CD8-positive, alpha-beta T cell (primary cell): ENCODE measurements at regions of chr18 and their contacts with region 1.

Region 1: GRCh38 chr18:34965108-34965507 is 76.1 kb upstream of the MAPRE2 start:
- DNase-seq: no peak
- ATAC-seq: no peak
- H3K4me3 ChIP-seq: no peak overlapping the region
- H3K4me3 Mint-ChIP-seq: no peak overlapping the region
- H3K27ac ChIP-seq: no peak overlapping the region
- H3K27ac Mint-ChIP-seq: no peak overlapping the region
- H3K4me1 ChIP-seq: no peaks in the 10 kb centered on the region
- H3K4me1 Mint-ChIP-seq: no peaks in the 10 kb centered on the region
- H3K27me3 ChIP-seq: no peaks in the 10 kb centered on the region
- H3K27me3 Mint-ChIP-seq: peaks cover 4% of the 10 kb centered on the region
- CTCF ChIP-seq: no peak

Region 2: GRCh38 chr18:34611904-34612303 is 353.2 kb before region 1 on chr18:
- CTCF ChIA-PET with region 1: no interaction called
- POLR2A ChIA-PET with region 1: no interaction called
- intact Hi-C with region 1: loop called in 1 of 2 experiments (anchors 5 kb)
- DNase-seq: no peak
- ATAC-seq: no peak
- H3K4me3 ChIP-seq: no peak overlapping the region
- H3K4me3 Mint-ChIP-seq: no peak overlapping the region
- H3K27ac ChIP-seq: no peak overlapping the region
- H3K27ac Mint-ChIP-seq: no peak overlapping the region
- H3K4me1 ChIP-seq: no peaks in the 10 kb centered on the region
- H3K4me1 Mint-ChIP-seq: no peaks in the 10 kb centered on the region
- H3K27me3 ChIP-seq: no peaks in the 10 kb centered on the region
- H3K27me3 Mint-ChIP-seq: no peaks in the 10 kb centered on the region
- CTCF ChIP-seq: no peak

Region 3: DNA sequence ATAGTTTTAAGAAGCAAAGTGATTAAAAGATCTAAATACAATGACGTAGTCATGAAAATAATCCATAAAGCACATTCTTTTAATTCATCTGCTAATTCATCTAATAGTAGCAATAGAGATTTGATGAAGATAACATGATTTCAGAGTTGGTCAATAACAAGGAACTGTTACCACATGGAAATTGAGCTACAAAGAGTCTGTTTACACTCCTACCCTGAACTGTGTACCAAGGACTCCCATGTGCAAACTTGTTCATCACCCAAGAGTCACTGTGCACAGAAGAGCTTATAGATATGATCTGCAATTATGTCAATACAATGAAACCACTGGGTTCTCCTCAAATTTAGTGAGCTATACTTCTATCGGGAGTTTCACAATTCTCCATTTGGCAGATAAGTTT is 333.5 kb before region 1 on chr18:
- CTCF ChIA-PET with region 1: no interaction called
- POLR2A ChIA-PET with region 1: no interaction called
- intact Hi-C with region 1: no loop called
- DNase-seq: no peak
- ATAC-seq: no peak
- H3K4me3 ChIP-seq: no peak overlapping the region
- H3K4me3 Mint-ChIP-seq: no peak overlapping the region
- H3K27ac ChIP-seq: no peak overlapping the region
- H3K27ac Mint-ChIP-seq: no peak overlapping the region
- H3K4me1 ChIP-seq: no peaks in the 10 kb centered on the region
- H3K4me1 Mint-ChIP-seq: no peaks in the 10 kb centered on the region
- H3K27me3 ChIP-seq: no peaks in the 10 kb centered on the region
- H3K27me3 Mint-ChIP-seq: peaks cover 2% of the 10 kb centered on the region
- CTCF ChIP-seq: no peak